ENCODE measurements at regions of chr3 and their contacts with region 1.

Region 1: GRCh38 chr3:51498876-51499738 is 708 bp downstream of the DCAF1 start:
- DNase-seq: peak; percentile 89
- H3K4me3 Mint-ChIP-seq: peak overlapping the region; percentile 91
- H3K27ac Mint-ChIP-seq: peak overlapping the region; percentile 94
- H3K4me1 Mint-ChIP-seq: peaks cover 36% of the 10 kb centered on the region
- H3K27me3 Mint-ChIP-seq: no peaks in the 10 kb centered on the region

Region 2: DNA sequence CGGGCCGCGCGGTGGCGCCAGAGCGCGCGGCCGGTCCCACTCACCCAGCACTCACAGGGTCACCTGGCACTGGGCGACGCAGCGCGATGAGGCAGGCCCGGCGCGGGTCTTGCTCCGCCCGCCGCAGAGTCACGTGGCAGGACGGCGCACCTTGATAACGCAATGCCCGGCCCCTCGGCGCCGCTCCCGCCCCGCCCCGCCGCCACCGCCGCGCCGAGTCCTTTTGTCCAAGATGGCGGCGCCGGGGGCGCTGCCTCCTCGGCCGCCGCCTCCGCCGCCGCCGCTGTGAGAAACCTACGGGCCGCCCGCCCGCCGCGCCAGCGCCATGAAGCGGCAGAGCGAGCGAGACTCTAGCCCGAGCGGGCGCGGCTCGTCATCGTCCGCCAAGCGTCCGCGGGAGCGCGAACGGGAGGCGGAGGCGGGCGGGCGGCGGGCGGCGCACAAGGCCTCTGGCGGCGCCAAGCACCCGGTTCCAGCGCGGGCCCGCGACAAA is 108.0 kb before region 1 on chr3 and contains the start of gene RBM15B:
- CTCF ChIA-PET with region 1: interaction called, 15 read pairs
- POLR2A ChIA-PET with region 1: interaction called, 20 read pairs
- DNase-seq: peak; percentile 98
- H3K4me3 Mint-ChIP-seq: peak within 1 kb of the TSS; percentile 83
- H3K27ac Mint-ChIP-seq: peak within 1 kb of the TSS; percentile 88
- H3K4me1 Mint-ChIP-seq: peaks cover 82% of the 10 kb centered on the region
- H3K27me3 Mint-ChIP-seq: no peaks in the 10 kb centered on the region
- total RNA-seq, gene RBM15B: 24.5 to 25.4 TPM

Region 3: DNA sequence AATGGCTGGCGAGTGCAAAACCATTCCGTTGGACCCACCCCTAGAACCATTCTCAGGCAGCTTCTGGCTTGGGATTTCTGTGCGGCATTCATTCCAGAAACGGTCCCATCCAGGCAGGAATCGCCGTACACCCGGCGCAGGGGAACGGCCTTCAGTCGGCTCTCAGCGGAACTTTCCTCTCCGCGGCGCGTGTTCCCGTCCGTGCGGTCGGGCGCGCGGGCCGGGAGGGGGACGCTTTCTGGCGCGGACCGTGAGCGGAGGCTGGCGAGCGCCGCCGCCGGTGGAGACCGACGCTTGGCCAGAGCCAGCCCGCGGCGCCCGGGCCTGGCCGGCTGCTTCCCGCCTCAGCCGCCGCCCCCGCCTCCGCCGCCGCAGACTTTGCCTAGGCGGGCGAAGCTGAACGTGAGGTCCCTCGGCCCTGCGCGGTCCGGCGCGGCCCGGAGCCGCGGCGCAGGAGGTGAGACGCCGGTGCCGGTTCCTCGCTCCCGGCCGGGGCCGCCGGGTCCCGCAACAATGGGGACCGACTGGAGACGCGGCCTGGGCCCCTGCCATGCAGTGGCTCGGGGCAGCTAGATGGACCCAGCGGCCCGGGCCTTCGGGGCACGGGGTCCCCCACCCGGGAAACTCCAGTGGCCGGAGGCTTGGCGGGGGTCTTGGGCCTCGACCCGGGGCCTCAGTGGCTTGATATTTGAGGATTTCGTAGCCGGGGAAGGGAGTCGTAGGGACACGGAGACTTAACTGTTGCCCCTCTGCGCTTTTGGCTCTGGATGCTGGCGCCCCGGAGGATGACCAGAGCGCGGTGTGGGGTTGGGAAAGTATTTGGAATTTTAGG is 39.6 kb after region 1 on chr3 and contains the start of gene RAD54L2:
- CTCF ChIA-PET with region 1: interaction called, 53 read pairs
- POLR2A ChIA-PET with region 1: interaction called, 25 read pairs
- DNase-seq: peak; percentile 79
- H3K4me3 Mint-ChIP-seq: peak within 1 kb of the TSS; percentile 89
- H3K27ac Mint-ChIP-seq: peak within 1 kb of the TSS; percentile 80
- H3K4me1 Mint-ChIP-seq: peaks cover 35% of the 10 kb centered on the region
- H3K27me3 Mint-ChIP-seq: no peaks in the 10 kb centered on the region
- total RNA-seq, gene RAD54L2: 30.4 to 30.5 TPM

Region 4: GRCh38 chr3:51670823-51671733 is 172.0 kb after region 1 on chr3 and contains the start of gene TEX264:
- CTCF ChIA-PET with region 1: interaction called, 180 read pairs
- POLR2A ChIA-PET with region 1: interaction called, 120 read pairs
- DNase-seq: peak; percentile 95
- H3K4me3 Mint-ChIP-seq: peak within 1 kb of the TSS; percentile 93
- H3K27ac Mint-ChIP-seq: peak within 1 kb of the TSS; percentile 87
- H3K4me1 Mint-ChIP-seq: peaks cover 66% of the 10 kb centered on the region
- H3K27me3 Mint-ChIP-seq: no peaks in the 10 kb centered on the region
- total RNA-seq, gene TEX264: 103 to 108 TPM

Region 5: GRCh38 chr3:51718547-51719409 is 219.7 kb after region 1 on chr3:
- CTCF ChIA-PET with region 1: interaction called, 10 read pairs
- POLR2A ChIA-PET with region 1: no interaction called
- DNase-seq: peak; percentile 83
- H3K4me3 Mint-ChIP-seq: no peak overlapping the region
- H3K27ac Mint-ChIP-seq: no peak overlapping the region
- H3K4me1 Mint-ChIP-seq: peaks cover 38% of the 10 kb centered on the region
- H3K27me3 Mint-ChIP-seq: no peaks in the 10 kb centered on the region